ENCODE measurements at regions of chr11 and their contacts with region 1.

Region 1: DNA sequence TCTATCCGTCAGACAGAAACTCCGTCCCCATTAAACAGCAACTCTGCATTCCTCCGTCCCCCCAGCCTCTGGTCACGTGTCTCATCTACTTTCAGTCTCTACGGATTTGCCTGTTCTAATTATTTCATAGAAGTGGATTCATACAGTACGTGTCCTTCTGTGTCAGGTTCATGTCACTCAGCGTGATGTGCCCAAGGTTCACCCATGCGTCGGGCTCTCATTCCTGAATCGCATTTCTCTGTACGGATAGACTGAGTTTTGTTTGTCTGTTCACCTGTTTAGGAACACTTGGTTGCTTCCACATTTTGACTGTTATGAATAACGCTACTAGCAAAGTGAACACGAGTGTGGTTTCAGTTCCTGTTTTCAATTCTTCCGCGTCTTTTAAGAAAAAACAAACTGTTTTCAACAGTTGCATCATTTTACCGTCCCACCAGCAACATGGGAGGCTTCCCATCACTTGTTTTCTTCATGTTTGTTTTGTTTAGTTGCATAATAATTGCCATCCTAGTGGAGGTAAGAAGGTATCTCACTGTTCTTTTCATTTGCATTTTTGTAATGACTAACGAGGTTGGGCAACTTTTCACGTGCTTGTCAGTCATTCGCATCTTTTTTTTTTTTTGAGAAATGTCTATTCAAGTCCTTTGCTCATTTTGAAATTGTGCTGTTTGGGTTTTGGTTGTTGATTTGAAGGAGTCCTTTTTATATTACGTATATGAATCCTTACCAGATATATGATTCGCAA is 8.9 kb upstream of the NLRP6 start:
- DNase-seq: peak; percentile 80
- H3K4me3 Mint-ChIP-seq: peak overlapping the region; percentile 89
- H3K27ac Mint-ChIP-seq: peak overlapping the region; percentile 99
- H3K4me1 Mint-ChIP-seq: peaks cover 36% of the 10 kb centered on the region
- H3K27me3 Mint-ChIP-seq: no peaks in the 10 kb centered on the region

Region 2: GRCh38 chr11:199782-200181 is 69.5 kb before region 1 on chr11:
- CTCF ChIA-PET with region 1: no interaction called
- intact Hi-C with region 1: no loop called
- DNase-seq: peak; percentile 5
- H3K4me3 Mint-ChIP-seq: no peak overlapping the region
- H3K27ac Mint-ChIP-seq: no peak overlapping the region
- H3K4me1 Mint-ChIP-seq: peaks cover 41% of the 10 kb centered on the region
- H3K27me3 Mint-ChIP-seq: no peaks in the 10 kb centered on the region

Region 3: GRCh38 chr11:236774-237767 is 32.2 kb before region 1 on chr11 and contains the start of gene PSMD13:
- CTCF ChIA-PET with region 1: no interaction called
- intact Hi-C with region 1: loop called (anchors 1 kb)
- DNase-seq: peak; percentile 89
- H3K4me3 Mint-ChIP-seq: peak within 1 kb of the TSS; percentile 85
- H3K27ac Mint-ChIP-seq: peak within 1 kb of the TSS; percentile 95
- H3K4me1 Mint-ChIP-seq: peaks cover 45% of the 10 kb centered on the region
- H3K27me3 Mint-ChIP-seq: no peaks in the 10 kb centered on the region
- total RNA-seq, gene PSMD13: 206 to 210 TPM

Region 4: DNA sequence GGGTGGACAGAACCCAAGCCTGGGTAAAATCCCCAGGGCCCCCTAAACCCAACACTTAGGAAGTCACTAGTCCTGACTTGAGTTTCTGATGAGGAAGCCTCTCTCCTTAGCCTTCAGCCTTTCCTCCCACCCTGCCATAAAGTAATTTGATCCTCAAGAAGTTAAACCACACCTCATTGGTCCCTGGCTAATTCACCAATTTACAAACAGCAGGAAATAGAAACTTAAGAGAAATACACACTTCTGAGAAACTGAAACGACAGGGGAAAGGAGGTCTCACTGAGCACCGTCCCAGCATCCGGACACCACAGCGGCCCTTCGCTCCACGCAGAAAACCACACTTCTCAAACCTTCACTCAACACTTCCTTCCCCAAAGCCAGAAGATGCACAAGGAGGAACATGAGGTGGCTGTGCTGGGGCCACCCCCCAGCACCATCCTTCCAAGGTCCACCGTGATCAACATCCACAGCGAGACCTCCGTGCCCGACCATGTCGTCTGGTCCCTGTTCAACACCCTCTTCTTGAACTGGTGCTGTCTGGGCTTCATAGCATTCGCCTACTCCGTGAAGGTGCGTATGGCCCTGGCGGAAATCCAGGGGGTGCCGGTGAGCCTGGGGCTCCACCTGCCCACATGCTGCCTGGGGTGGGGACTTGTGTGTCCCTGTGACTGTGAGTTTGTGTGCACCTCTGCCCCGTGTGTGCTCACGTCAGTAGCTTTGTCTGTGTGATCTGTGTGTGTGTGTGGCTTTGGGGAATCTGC is 44.6 kb after region 1 on chr11 and contains the start of gene IFITM1:
- CTCF ChIA-PET with region 1: interaction called, 4 read pairs
- intact Hi-C with region 1: loop called (anchors 1 kb)
- DNase-seq: peak; percentile 77
- H3K4me3 Mint-ChIP-seq: peak within 1 kb of the TSS; percentile 93
- H3K27ac Mint-ChIP-seq: peak within 1 kb of the TSS; percentile 95
- H3K4me1 Mint-ChIP-seq: peaks cover 22% of the 10 kb centered on the region
- H3K27me3 Mint-ChIP-seq: no peaks in the 10 kb centered on the region
- total RNA-seq, gene IFITM1: 359 to 378 TPM

Region 5: GRCh38 chr11:355581-356458 is 86.5 kb after region 1 on chr11:
- CTCF ChIA-PET with region 1: interaction called, 9 read pairs
- intact Hi-C with region 1: loop called (anchors 1 kb)
- DNase-seq: peak; percentile 93
- H3K4me3 Mint-ChIP-seq: peak overlapping the region; percentile 94
- H3K27ac Mint-ChIP-seq: peak overlapping the region; percentile 99
- H3K4me1 Mint-ChIP-seq: peaks cover 36% of the 10 kb centered on the region
- H3K27me3 Mint-ChIP-seq: no peaks in the 10 kb centered on the region

Region 6: GRCh38 chr11:695538-696248 is 426.4 kb after region 1 on chr11 and contains the start of gene TMEM80:
- CTCF ChIA-PET with region 1: no interaction called
- intact Hi-C with region 1: loop called (anchors 5 kb)
- DNase-seq: peak; percentile 99
- H3K4me3 Mint-ChIP-seq: peak within 1 kb of the TSS; percentile 83
- H3K27ac Mint-ChIP-seq: peak within 1 kb of the TSS; percentile 93
- H3K4me1 Mint-ChIP-seq: peaks cover 54% of the 10 kb centered on the region
- H3K27me3 Mint-ChIP-seq: no peaks in the 10 kb centered on the region
- total RNA-seq, gene TMEM80: 5.6 to 6.0 TPM

Measured in activated naive CD4-positive, alpha-beta T cell treated with anti-CD3 and anti-CD28 coated beads for 36 hours (primary cell).